ENCODE measurements at regions of chr2 and their contacts with region 1.

Region 1: DNA sequence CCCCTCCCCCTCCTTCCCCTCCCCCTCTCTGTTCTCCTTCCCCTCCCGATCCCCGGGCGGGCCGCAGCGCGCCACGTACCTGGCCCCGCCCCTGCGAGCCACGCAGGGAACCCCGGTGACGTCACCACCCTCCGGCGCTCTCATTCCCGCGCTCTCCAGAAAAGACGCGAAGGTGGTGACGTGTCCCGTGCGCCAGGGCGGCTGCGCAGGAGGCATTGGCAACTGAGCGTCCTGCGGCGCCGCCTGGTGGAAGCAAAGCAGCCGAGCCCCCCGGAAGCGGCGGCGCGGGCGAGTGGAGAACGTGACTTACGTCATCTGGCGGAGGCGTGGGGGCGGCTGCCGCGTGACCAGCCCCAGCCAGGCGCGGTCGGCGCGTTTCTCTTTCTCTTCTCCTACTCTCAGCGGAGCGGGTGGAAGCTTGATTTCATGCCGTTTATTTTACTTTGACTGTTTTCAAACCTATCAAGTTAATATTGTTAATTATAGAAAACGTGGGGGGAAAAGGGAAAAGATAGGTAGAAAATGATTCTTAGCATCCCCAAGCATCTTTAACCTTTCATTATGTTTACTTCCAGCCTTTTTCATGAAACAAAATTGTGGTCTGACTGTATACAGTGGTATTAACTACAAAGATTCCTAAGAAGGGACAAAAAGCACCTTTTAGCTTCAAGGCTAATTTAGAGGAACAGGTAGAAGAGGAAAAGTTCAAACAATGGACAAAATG is 48.1 kb downstream of the C2orf42 start:
- DNase-seq: peak; percentile 88 to 99 (median 96)

Region 2: GRCh38 chr2:69704446-69704845 is 438.3 kb before region 1 on chr2:
- intact Hi-C with region 1: no loop called
- DNase-seq: no peak

Region 3: GRCh38 chr2:69914170-69914960 is 228.4 kb before region 1 on chr2:
- intact Hi-C with region 1: loop called (anchors 1 kb)
- DNase-seq: peak; percentile 95 to 100 (median 100)

Region 4: GRCh38 chr2:70070541-70071268 is 72.0 kb before region 1 on chr2:
- intact Hi-C with region 1: loop called (anchors 5 kb)
- DNase-seq: peak in 41 of 42 donors; percentile 53 to 91 (median 76)